ENCODE measurements at regions of chr6 and their contacts with region 1.

Region 1: GRCh38 chr6:14354919-14355572 is 237.5 kb downstream of the CD83 start:
- DNase-seq: peak; percentile 86
- H3K4me3 ChIP-seq: no peak overlapping the region
- CTCF ChIP-seq: no peak

Region 2: GRCh38 chr6:14440940-14441781 is 86.1 kb after region 1 on chr6:
- in situ Hi-C with region 1: loop called (anchors 5 kb)
- DNase-seq: no peak
- H3K4me3 ChIP-seq: no peak overlapping the region
- CTCF ChIP-seq: no peak